ENCODE measurements at regions of chr7 and their contacts with region 1.

Region 1: GRCh38 chr7:2241580-2242540 is at the starts of genes MRM2 and NUDT1:
- DNase-seq: peak; percentile 83 to 93
- H3K4me3 ChIP-seq: peak within 1 kb of the TSS; percentile 94
- H3K27ac ChIP-seq: peak within 1 kb of the TSS; percentile 20; the same call in 1 of the 2 replicates
- H3K4me1 ChIP-seq: peaks cover 26% of the 10 kb centered on the region
- H3K27me3 ChIP-seq: no peaks in the 10 kb centered on the region
- CTCF ChIP-seq: no peak
- total RNA-seq, gene MRM2: 36.8 and 40.9 TPM in 2 replicates
- total RNA-seq, gene NUDT1: 63.9 and 73.3 TPM in 2 replicates

Region 2: DNA sequence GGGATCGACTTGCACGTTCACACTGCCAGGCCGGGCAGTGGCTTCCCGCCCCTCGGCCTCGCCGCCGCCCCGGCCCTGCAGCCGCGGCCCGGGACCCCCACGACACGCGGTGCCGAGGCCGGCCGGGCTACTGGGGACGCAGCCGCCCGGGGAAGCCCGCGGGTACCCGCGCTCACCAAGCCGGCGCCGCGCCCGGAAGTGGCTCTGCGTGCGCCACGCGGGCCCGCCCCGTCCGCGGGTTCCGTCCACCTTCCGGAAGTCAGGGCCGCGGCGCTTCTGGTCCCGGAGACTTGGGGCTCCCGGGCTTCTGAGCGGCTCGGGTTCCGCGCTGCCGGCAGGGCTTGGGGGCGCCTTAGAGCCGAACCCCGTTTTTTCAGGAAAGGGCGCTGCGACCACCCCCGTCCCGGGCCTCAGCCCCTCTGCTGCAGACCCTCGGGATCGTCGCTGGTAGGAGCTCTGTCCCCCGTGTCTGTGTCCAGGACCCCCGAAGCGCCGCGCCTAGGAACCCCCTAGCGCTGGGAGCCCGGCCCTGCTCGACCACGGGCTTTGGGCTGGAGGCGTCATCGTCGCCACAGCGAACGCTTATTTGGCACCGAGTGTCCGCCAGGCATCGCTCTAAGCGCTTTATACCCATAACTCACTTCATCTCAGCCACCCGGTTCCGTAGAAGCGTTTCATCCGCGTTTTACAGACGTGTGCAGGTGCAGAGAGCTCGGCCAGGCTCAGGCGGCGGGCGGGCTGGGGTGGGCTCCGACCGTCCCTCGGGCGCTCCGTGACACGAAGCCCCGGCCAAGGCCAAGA is 671.8 kb before region 1 on chr7 and contains the start of gene PSMG3:
- CTCF ChIA-PET with region 1: no interaction called
- POLR2A ChIA-PET with region 1: interaction called, 4 read pairs
- intact Hi-C with region 1: loop called (anchors 10 kb)
- DNase-seq: peak; percentile 80 to 93
- H3K4me3 ChIP-seq: peak within 1 kb of the TSS; percentile 97
- H3K27ac ChIP-seq: peak within 1 kb of the TSS; percentile 65
- H3K4me1 ChIP-seq: peaks cover 34% of the 10 kb centered on the region
- H3K27me3 ChIP-seq: no peaks in the 10 kb centered on the region
- CTCF ChIP-seq: peak; percentile 44; the same call in 1 of the 2 replicates
- total RNA-seq, gene PSMG3: 63.3 and 78.9 TPM in 2 replicates

Region 3: GRCh38 chr7:2224934-2225333 is 16.9 kb before region 1 on chr7:
- CTCF ChIA-PET with region 1: no interaction called
- POLR2A ChIA-PET with region 1: no interaction called
- intact Hi-C with region 1: loop called (anchors 1 kb)
- DNase-seq: peak; percentile 65 to 83
- H3K4me3 ChIP-seq: no peak overlapping the region
- H3K27ac ChIP-seq: no peak overlapping the region
- H3K4me1 ChIP-seq: no peaks in the 10 kb centered on the region
- H3K27me3 ChIP-seq: no peaks in the 10 kb centered on the region
- CTCF ChIP-seq: no peak

Region 4: DNA sequence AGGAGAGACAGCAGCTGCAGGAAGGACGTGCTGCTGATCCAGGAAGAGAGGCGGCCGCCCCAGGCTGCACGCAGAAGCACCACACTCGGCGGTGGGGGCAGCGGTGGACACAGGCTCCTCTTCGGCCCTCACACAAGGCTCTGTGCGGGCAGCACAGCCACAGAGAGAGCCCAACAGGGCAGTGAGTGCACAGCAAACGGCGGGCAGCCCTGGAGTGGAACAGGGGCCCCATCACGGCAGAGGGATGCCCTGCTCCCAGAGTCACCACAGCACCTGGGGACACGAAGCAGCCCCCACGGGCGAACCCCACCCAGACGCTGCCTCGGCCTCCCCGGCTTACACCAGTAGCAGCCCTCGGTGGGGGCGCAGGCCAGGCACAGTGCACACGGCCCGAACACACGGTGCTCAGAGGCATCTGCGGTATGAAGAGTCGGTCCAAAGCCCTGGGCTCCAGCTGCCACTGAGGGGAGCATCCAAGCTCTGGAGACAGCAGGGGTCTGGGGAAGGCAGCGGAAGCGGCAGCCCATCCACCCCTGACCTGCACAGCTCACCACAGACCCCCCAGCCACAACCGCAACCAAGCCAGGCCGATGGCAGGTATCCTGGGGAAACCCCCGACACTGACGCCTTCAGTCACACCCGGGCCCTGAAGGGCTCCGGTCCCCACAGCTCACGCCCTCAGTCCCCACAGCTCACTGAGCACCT is 17.0 kb after region 1 on chr7:
- CTCF ChIA-PET with region 1: interaction called, 4 read pairs
- POLR2A ChIA-PET with region 1: interaction called, 19 read pairs
- intact Hi-C with region 1: no loop called
- DNase-seq: no peak
- H3K4me3 ChIP-seq: no peak overlapping the region
- H3K27ac ChIP-seq: no peak overlapping the region
- H3K4me1 ChIP-seq: peaks cover 54% of the 10 kb centered on the region
- H3K27me3 ChIP-seq: no peaks in the 10 kb centered on the region
- CTCF ChIP-seq: no peak

Region 5: GRCh38 chr7:2602406-2603043 is 360.7 kb after region 1 on chr7:
- CTCF ChIA-PET with region 1: no interaction called
- POLR2A ChIA-PET with region 1: interaction called, 10 read pairs
- intact Hi-C with region 1: no loop called
- DNase-seq: peak in 1 of 2 experiments; percentile 22
- H3K4me3 ChIP-seq: no peak overlapping the region
- H3K27ac ChIP-seq: no peak overlapping the region
- H3K4me1 ChIP-seq: no peaks in the 10 kb centered on the region; the same call in 1 of the 2 replicates
- H3K27me3 ChIP-seq: no peaks in the 10 kb centered on the region
- CTCF ChIP-seq: no peak

Region 6: GRCh38 chr7:2651336-2651735 is 409.5 kb after region 1 on chr7:
- CTCF ChIA-PET with region 1: no interaction called
- POLR2A ChIA-PET with region 1: no interaction called
- intact Hi-C with region 1: no loop called
- DNase-seq: no peak
- H3K4me3 ChIP-seq: no peak overlapping the region
- H3K27ac ChIP-seq: no peak overlapping the region
- H3K4me1 ChIP-seq: no peaks in the 10 kb centered on the region
- H3K27me3 ChIP-seq: no peaks in the 10 kb centered on the region
- CTCF ChIP-seq: no peak

Measured in PC-9 (cell line).